ENCODE measurements at regions of chr7 and their contacts with region 1.

Region 1: DNA sequence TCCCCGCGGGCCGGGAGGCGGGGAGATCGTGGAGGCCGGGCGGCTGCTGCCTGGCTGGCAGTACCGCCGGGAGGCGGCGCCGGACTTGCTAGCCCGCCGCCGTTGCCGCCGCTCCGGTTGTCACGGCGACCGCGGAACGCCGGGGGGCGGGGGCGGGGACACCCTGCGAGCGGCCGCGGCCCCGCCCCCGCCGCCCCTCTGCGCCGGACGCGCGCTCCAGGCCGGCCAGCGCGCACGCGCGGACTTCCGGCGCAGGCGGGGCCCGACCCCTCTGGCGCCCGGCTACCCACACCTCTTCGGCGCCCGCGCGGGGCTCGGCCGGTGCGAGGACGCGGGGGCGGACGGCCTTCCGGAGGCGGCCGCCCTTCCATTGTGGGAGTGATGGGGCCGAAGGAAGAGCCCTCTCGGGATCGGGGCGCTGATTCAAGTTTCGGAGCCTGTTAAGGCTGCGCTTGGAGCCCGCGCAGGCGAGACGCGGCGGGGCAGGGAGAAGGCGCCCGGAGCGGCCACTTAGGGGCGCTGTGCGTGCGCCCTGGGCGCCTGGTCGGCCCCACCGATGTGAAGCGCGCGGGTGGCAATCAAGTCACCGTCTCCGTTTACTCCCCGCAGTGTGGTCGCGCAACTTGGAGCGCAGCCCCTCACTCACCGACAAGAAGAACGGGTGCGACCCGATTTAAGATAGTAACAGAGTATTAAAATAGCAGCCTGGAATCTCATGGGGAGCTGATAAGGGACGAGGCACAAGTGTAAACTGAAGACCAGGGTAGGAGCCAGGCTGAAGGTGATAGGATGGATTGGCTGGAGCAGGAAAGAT is 448 bp upstream of the DPY19L1 start:
- DNase-seq: peak; percentile 94 to 96 (median 96)
- ATAC-seq: peak; percentile 89
- H3K4me3 ChIP-seq: peak overlapping the region; percentile 84
- H3K27ac ChIP-seq: peak overlapping the region; percentile 55
- H3K4me1 ChIP-seq: peaks cover 10 to 14% of the 10 kb centered on the region in 2 experiments
- H3K27me3 ChIP-seq: no peaks in the 10 kb centered on the region
- CTCF ChIP-seq: peak; percentile 80 to 88 (median 85)
- EP300 ChIP-seq: no peak; the same call in 1 of the 2 replicates
- POLR2A ChIP-seq: no peak; the same call in 1 of the 2 replicates
- RAD21 ChIP-seq: peak; percentile 68

Region 2: DNA sequence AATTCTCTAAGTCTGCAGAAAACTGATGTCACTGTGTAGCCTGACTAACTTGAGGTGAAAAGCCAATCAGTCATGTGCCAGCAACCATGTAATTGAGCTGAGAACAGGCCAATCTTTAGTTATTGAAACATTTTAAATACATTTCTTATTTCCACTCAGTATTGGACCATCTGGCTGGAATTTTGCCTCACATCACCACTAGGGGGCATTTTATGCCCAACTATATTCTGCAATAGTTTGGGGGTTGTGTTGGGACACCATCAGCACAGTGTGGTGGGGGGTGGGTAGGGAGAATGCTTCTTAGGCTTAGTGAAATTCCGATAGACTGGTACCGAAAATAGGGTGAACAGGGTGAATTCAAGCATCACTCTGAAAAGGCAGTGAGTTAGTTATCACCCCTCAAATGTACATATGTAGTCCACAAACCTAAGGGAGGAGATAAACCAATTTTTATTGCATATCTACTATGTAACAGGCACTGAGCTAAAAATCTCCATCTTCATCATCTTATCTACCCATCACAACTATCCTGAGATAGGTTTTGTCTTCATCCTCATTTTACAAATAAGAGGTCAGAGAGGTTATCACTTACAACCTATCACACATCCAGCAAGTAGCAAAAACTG is 361.9 kb before region 1 on chr7:
- CTCF ChIA-PET with region 1: no interaction called
- POLR2A ChIA-PET with region 1: no interaction called
- in situ Hi-C with region 1: no loop called
- intact Hi-C with region 1: loop called (anchors 10 kb)
- DNase-seq: peak; percentile 16 to 31 (median 21)
- ATAC-seq: peak; percentile 73
- H3K4me3 ChIP-seq: no peak overlapping the region
- H3K27ac ChIP-seq: no peak overlapping the region
- H3K4me1 ChIP-seq: no peaks in the 10 kb centered on the region
- H3K27me3 ChIP-seq: no peaks in the 10 kb centered on the region
- CTCF ChIP-seq: peak; percentile 16 to 49 (median 44); a peak in 4 of 6 replicates
- EP300 ChIP-seq: no peak
- POLR2A ChIP-seq: no peak
- RAD21 ChIP-seq: peak in 1 of 2 experiments; percentile 47; a peak in 2 of 4 replicates

Region 3: DNA sequence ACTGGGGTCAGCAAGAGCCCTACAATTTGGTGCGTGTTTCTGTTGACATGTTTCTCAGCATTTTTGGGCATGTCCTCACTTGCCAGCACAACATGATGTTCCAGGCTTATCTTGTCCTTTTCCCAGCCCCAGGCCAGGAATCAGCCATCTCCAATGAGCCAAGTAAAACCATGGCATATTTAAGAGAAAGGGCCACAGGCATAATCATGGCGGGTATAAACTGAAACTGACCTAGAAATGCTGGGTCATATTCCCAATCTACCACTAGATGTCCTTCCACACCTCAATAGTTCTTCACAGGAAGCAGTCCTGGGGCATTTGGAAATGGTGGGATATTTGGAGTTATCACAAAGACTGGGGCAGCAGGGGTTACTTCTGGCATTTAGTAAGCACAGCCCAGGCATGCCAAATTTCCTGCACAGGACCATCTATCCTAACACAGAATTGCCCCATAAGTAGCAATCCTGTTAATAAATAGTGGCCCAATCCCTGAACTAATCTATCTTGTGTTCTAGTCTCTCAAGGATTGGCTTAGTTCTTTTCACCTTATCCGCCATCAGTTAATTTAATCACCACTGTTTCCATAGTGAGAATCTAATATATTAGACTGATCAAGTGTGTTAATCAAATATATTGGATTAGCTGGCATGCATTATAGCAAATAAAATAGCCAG is 278.1 kb before region 1 on chr7:
- CTCF ChIA-PET with region 1: no interaction called
- POLR2A ChIA-PET with region 1: no interaction called
- in situ Hi-C with region 1: no loop called
- intact Hi-C with region 1: loop called (anchors 2 kb)
- DNase-seq: peak; percentile 30 to 35 (median 34)
- ATAC-seq: peak; percentile 90
- H3K4me3 ChIP-seq: no peak overlapping the region
- H3K27ac ChIP-seq: no peak overlapping the region
- H3K4me1 ChIP-seq: no peaks in the 10 kb centered on the region
- H3K27me3 ChIP-seq: no peaks in the 10 kb centered on the region
- CTCF ChIP-seq: peak; percentile 43 to 57 (median 50); a peak in 5 of 6 replicates
- EP300 ChIP-seq: no peak
- POLR2A ChIP-seq: no peak
- RAD21 ChIP-seq: peak; percentile 30 to 65; a peak in 3 of 4 replicates

Region 4: GRCh38 chr7:34823640-34824258 is 214.0 kb before region 1 on chr7:
- CTCF ChIA-PET with region 1: interaction called, 8 read pairs
- POLR2A ChIA-PET with region 1: no interaction called
- in situ Hi-C with region 1: no loop called
- intact Hi-C with region 1: loop called (anchors 1 kb)
- DNase-seq: peak; percentile 62 to 71 (median 65)
- ATAC-seq: peak; percentile 87
- H3K4me3 ChIP-seq: no peak overlapping the region
- H3K27ac ChIP-seq: no peak overlapping the region
- H3K4me1 ChIP-seq: no peaks in the 10 kb centered on the region
- H3K27me3 ChIP-seq: no peaks in the 10 kb centered on the region; a peak in 1 of 5 replicates
- CTCF ChIP-seq: peak; percentile 73 to 83 (median 74)
- EP300 ChIP-seq: no peak
- POLR2A ChIP-seq: no peak
- RAD21 ChIP-seq: peak; percentile 69 to 72

Region 5: GRCh38 chr7:34900891-34901513 is 136.7 kb before region 1 on chr7:
- CTCF ChIA-PET with region 1: no interaction called
- POLR2A ChIA-PET with region 1: no interaction called
- in situ Hi-C with region 1: no loop called
- intact Hi-C with region 1: loop called (anchors 5 kb)
- DNase-seq: peak; percentile 44 to 63 (median 53)
- ATAC-seq: peak; percentile 94
- H3K4me3 ChIP-seq: no peak overlapping the region
- H3K27ac ChIP-seq: no peak overlapping the region
- H3K4me1 ChIP-seq: no peaks in the 10 kb centered on the region
- H3K27me3 ChIP-seq: peaks cover 0 to 6% of the 10 kb centered on the region in 2 experiments; a peak in 1 of 5 replicates
- CTCF ChIP-seq: peak; percentile 54 to 62 (median 59); a peak in 5 of 6 replicates
- EP300 ChIP-seq: no peak
- POLR2A ChIP-seq: no peak
- RAD21 ChIP-seq: peak; percentile 29 to 47; a peak in 3 of 4 replicates

Region 6: GRCh38 chr7:34928049-34928448 is 109.7 kb before region 1 on chr7:
- CTCF ChIA-PET with region 1: interaction called, 3 read pairs
- POLR2A ChIA-PET with region 1: no interaction called
- in situ Hi-C with region 1: no loop called
- intact Hi-C with region 1: loop called (anchors 10 kb)
- DNase-seq: peak; percentile 17 to 64 (median 28)
- ATAC-seq: peak; percentile 94
- H3K4me3 ChIP-seq: no peak overlapping the region
- H3K27ac ChIP-seq: no peak overlapping the region
- H3K4me1 ChIP-seq: no peaks in the 10 kb centered on the region
- H3K27me3 ChIP-seq: no peaks in the 10 kb centered on the region
- CTCF ChIP-seq: peak; percentile 58 to 68 (median 60)
- EP300 ChIP-seq: no peak
- POLR2A ChIP-seq: no peak
- RAD21 ChIP-seq: no peak; a peak in 1 of 4 replicates

Region 7: GRCh38 chr7:35003679-35004303 is 33.9 kb before region 1 on chr7:
- CTCF ChIA-PET with region 1: no interaction called
- POLR2A ChIA-PET with region 1: interaction called, 3 read pairs
- in situ Hi-C with region 1: no loop called
- intact Hi-C with region 1: loop called (anchors 5 kb)
- DNase-seq: peak; percentile 18 to 86 (median 42)
- ATAC-seq: peak; percentile 96
- H3K4me3 ChIP-seq: no peak overlapping the region; the same call in 1 of the 2 replicates
- H3K27ac ChIP-seq: peak overlapping the region; percentile 94
- H3K4me1 ChIP-seq: peaks cover 0 to 31% of the 10 kb centered on the region in 2 experiments
- H3K27me3 ChIP-seq: no peaks in the 10 kb centered on the region
- CTCF ChIP-seq: no peak
- EP300 ChIP-seq: no peak
- POLR2A ChIP-seq: peak; percentile 32; the same call in 1 of the 2 replicates
- RAD21 ChIP-seq: 0 out of 4 replicates have a peak, but pooled peaks of 1 of the 2 experiments have one; percentile 10

Region 8: DNA sequence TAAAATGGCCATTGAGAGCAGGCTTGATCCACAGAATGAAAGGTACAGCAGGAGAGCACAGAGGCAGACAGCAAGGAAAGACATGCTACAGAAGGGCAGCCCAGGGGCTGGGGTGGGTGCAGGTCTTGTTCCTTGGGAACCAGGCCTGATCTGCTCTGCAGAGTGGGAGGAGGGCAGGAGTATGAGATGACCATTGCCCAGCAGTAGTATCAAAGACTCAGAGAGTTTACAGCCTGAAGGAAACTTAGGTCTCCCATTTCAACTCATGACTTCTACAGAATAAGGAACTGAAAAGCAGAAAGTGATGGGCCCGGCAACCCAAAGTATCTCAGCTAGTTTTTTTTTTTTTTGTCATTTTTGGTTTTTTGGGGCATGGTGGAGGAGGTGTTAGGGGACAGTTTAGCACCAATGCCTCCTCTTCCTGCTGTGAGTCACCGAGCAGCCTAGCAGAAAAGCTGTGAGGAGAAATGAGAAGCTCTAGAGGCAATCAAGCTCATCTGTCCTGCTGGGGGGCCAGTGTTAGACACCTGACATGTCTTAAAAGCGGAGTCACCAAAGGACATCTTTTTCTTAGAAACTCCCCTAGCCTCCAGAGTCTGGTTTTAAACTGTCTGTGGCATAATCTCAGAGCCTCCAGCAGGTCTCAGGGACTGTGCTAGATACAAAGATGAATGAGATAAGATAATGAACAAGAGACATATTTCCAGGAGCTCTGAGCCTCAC is 691.5 kb after region 1 on chr7:
- CTCF ChIA-PET with region 1: no interaction called
- POLR2A ChIA-PET with region 1: no interaction called
- in situ Hi-C with region 1: no loop called
- intact Hi-C with region 1: no loop called
- DNase-seq: peak in 1 of 4 experiments; percentile 28
- ATAC-seq: no peak
- H3K4me3 ChIP-seq: no peak overlapping the region
- H3K27ac ChIP-seq: no peak overlapping the region
- H3K4me1 ChIP-seq: peaks cover 0 to 10% of the 10 kb centered on the region in 2 experiments; a peak in 3 of 5 replicates
- H3K27me3 ChIP-seq: peaks cover 0 to 4% of the 10 kb centered on the region in 2 experiments; a peak in 3 of 5 replicates
- CTCF ChIP-seq: no peak
- EP300 ChIP-seq: no peak
- POLR2A ChIP-seq: no peak
- RAD21 ChIP-seq: no peak